ENCODE measurements at regions of chr6 and their contacts with region 1.

Region 1: GRCh38 chr6:156564127-156564806 is 212.9 kb upstream of the ARID1B start:
- DNase-seq: peak; percentile 47 to 85 (median 74)
- ATAC-seq: peak; percentile 94
- H3K4me3 ChIP-seq: no peak overlapping the region
- H3K4me3 Mint-ChIP-seq: no peak overlapping the region
- H3K27ac ChIP-seq: no peak overlapping the region
- H3K27ac Mint-ChIP-seq: no peak overlapping the region
- H3K4me1 ChIP-seq: peaks cover 6% of the 10 kb centered on the region
- H3K4me1 Mint-ChIP-seq: peaks cover 4% of the 10 kb centered on the region
- H3K27me3 ChIP-seq: no peaks in the 10 kb centered on the region
- H3K27me3 Mint-ChIP-seq: peaks cover 16% of the 10 kb centered on the region
- CTCF ChIP-seq: peak; percentile 89

Region 2: DNA sequence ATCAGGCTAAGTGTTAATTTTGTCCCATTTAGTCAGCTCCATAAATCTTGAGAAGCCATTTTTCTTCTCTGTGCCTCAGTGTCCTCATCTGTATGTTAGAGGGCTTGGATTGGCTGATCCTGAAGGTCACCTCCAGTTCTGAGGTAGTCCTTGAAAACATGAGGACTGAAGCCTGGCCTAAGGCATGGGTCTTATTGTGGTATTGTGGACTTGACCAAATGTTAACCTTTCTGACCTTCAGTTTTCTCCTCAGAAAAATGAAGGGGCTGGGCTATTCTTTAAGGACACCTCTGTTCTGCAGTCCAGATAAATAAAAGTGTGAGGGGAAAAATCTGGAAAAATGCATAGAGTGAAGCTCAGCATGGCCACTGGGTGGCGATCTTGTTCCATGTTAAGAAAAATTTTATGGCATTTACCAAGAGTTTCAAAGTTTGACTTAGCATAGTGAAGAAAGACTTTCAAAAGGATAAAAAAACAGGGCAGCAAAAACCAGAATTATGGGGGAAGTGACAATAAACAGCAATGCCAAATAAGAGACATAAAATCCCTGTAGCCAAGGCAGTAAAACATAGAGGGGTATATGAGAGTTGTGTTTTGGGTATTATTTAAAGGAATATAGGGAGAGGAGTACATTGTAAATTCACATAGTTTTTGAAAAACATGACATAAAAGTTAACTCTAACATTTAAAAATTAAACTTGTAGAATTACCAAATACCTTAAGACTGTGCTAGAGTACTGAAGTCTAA is 1236.8 kb before region 1 on chr6:
- CTCF ChIA-PET with region 1: no interaction called
- POLR2A ChIA-PET with region 1: no interaction called
- intact Hi-C with region 1: loop called in 1 of 2 experiments (anchors 5 kb)
- DNase-seq: peak; percentile 39 to 82 (median 57)
- ATAC-seq: peak; percentile 68
- H3K4me3 ChIP-seq: no peak overlapping the region
- H3K4me3 Mint-ChIP-seq: no peak overlapping the region
- H3K27ac ChIP-seq: no peak overlapping the region
- H3K27ac Mint-ChIP-seq: no peak overlapping the region
- H3K4me1 ChIP-seq: no peaks in the 10 kb centered on the region
- H3K4me1 Mint-ChIP-seq: peaks cover 13% of the 10 kb centered on the region
- H3K27me3 ChIP-seq: no peaks in the 10 kb centered on the region
- H3K27me3 Mint-ChIP-seq: no peaks in the 10 kb centered on the region
- CTCF ChIP-seq: peak; percentile 93

Region 3: GRCh38 chr6:155854787-155855186 is 709.5 kb before region 1 on chr6:
- CTCF ChIA-PET with region 1: no interaction called
- POLR2A ChIA-PET with region 1: no interaction called
- intact Hi-C with region 1: no loop called
- DNase-seq: no peak
- ATAC-seq: no peak
- H3K4me3 ChIP-seq: no peak overlapping the region
- H3K4me3 Mint-ChIP-seq: no peak overlapping the region
- H3K27ac ChIP-seq: no peak overlapping the region
- H3K27ac Mint-ChIP-seq: no peak overlapping the region
- H3K4me1 ChIP-seq: no peaks in the 10 kb centered on the region
- H3K4me1 Mint-ChIP-seq: no peaks in the 10 kb centered on the region
- H3K27me3 ChIP-seq: no peaks in the 10 kb centered on the region
- H3K27me3 Mint-ChIP-seq: no peaks in the 10 kb centered on the region
- CTCF ChIP-seq: no peak

Region 4: DNA sequence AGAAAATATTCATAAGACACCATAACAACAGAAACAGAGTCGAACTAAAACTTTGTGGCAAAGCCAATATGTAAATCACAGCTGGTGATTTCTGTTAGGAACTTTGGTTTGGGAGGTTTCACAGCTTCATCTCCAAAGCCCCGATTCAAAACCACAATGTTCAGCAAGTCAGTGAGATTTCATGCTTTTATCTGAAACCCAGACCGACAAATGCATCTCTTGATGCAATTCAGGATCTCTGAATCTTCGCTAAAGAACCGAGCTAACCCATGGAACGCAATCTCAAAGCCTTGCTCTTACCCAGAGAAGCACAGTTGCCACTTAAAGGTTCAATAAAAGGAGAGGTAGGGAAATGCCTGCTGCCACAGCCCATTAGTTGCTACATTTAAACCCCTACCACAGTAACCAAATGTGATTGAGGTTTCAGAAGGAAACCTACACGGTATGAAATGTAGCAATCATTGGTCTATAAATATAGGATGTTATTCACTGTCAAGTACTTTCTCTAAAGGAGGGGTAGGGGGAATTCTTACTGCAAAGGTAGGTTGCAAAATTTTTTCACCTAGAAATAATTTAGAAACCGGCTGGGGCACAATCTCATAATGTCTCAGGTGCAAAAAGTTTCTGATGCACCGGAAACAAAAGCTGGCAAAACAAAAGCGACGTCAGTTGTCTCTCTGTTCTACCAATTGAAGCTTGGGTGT is 168.0 kb before region 1 on chr6:
- CTCF ChIA-PET with region 1: interaction called, 3 read pairs
- POLR2A ChIA-PET with region 1: no interaction called
- intact Hi-C with region 1: loop called in 1 of 2 experiments (anchors 5 kb)
- DNase-seq: peak in 11 of 14 experiments; percentile 1 to 80 (median 19)
- ATAC-seq: peak; percentile 72
- H3K4me3 ChIP-seq: peak overlapping the region; percentile 37
- H3K4me3 Mint-ChIP-seq: peak overlapping the region; percentile 78
- H3K27ac ChIP-seq: peak overlapping the region; percentile 78 to 91
- H3K27ac Mint-ChIP-seq: peak overlapping the region; percentile 97
- H3K4me1 ChIP-seq: peaks cover 54% of the 10 kb centered on the region
- H3K4me1 Mint-ChIP-seq: peaks cover 97% of the 10 kb centered on the region
- H3K27me3 ChIP-seq: no peaks in the 10 kb centered on the region
- H3K27me3 Mint-ChIP-seq: no peaks in the 10 kb centered on the region
- CTCF ChIP-seq: no peak

Region 5: DNA sequence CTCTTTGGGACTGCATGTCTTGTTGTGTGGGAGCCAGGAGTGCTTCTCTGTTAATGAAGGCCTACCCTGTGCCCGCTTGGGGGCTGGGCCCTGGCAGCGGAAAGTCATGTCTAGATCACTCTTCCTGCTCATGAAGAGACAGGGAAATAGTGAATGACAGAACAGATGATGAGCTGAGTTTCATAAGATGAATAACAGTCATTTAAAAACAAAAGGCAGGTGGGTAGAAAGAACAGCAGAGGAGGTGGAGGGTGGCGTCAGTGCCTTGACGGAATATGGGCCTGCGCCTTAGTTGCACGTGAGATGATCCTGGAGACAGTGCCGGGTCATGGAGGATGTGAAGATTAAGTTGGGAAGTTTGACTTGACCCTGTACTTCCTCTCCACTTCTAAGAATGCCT is 298.4 kb after region 1 on chr6:
- CTCF ChIA-PET with region 1: no interaction called
- POLR2A ChIA-PET with region 1: no interaction called
- intact Hi-C with region 1: loop called in 1 of 2 experiments (anchors 5 kb)
- DNase-seq: peak in 2 of 14 experiments; percentile 4 to 25
- ATAC-seq: no peak
- H3K4me3 ChIP-seq: no peak overlapping the region
- H3K4me3 Mint-ChIP-seq: peak overlapping the region; percentile 3
- H3K27ac ChIP-seq: no peak overlapping the region
- H3K27ac Mint-ChIP-seq: peak overlapping the region; percentile 19
- H3K4me1 ChIP-seq: peaks cover 41% of the 10 kb centered on the region
- H3K4me1 Mint-ChIP-seq: peaks cover 92% of the 10 kb centered on the region
- H3K27me3 ChIP-seq: no peaks in the 10 kb centered on the region
- H3K27me3 Mint-ChIP-seq: no peaks in the 10 kb centered on the region
- CTCF ChIP-seq: no peak

Region 6: DNA sequence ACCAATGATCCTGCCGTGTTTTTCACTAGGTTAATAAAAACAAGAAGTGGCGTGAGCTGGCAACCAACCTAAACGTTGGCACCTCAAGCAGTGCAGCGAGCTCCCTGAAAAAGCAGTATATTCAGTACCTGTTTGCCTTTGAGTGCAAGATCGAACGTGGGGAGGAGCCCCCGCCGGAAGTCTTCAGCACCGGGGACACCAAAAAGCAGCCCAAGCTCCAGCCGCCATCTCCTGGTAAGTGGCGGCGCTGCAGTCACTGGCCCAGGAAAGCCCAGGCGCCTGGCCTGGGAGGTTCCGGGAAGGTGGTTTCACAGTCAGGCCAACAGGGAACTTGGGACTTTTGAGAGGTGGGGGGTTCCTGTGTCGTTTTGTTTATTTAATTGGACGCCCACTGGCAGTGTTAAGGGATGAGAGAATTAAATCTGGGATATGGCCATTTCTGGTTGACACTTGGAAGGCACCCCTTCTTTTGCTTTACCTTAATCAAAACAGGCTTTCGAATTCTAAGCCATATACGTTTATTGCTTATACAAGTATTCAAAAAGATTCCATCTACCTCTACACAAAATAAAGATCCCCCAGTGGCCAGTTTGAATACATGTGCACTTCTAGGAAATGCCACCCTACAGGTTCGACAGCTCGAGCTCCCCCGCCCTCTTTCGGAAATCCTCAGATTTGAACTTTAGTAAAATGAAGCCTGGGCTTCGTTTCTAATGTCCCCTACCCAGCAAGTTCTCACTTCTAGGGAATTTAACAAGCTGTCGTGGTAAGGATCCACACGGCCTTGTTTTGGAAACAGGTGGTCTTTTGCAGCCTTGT is 620.1 kb after region 1 on chr6:
- CTCF ChIA-PET with region 1: no interaction called
- POLR2A ChIA-PET with region 1: interaction called, 3 read pairs
- intact Hi-C with region 1: loop called (anchors 2 kb)
- DNase-seq: peak; percentile 35 to 75 (median 54)
- ATAC-seq: peak; percentile 85
- H3K4me3 ChIP-seq: no peak overlapping the region
- H3K4me3 Mint-ChIP-seq: no peak overlapping the region
- H3K27ac ChIP-seq: no peak overlapping the region
- H3K27ac Mint-ChIP-seq: no peak overlapping the region
- H3K4me1 ChIP-seq: peaks cover 16% of the 10 kb centered on the region
- H3K4me1 Mint-ChIP-seq: peaks cover 21% of the 10 kb centered on the region
- H3K27me3 ChIP-seq: no peaks in the 10 kb centered on the region
- H3K27me3 Mint-ChIP-seq: no peaks in the 10 kb centered on the region
- CTCF ChIP-seq: peak; percentile 63

Measured in CD4-positive, alpha-beta T cell (primary cell).